ENCODE measurements at regions of chr3 and their contacts with region 1.

Region 1: GRCh38 chr3:194315088-194315964 is 35.8 kb downstream of the CPN2 start:
- DNase-seq: peak; percentile 83 to 92 (median 87)
- ATAC-seq: peak; percentile 61 to 91 (median 90)
- H3K4me3 ChIP-seq: peak overlapping the region; percentile 3 to 63 (median 50)
- H3K27ac ChIP-seq: peak overlapping the region in 6 of 12 donors; percentile 13 to 61 (median 32)
- H3K4me1 ChIP-seq: peaks cover 0 to 39% (median 19%) of the 10 kb centered on the region in 12 donors
- H3K27me3 ChIP-seq: peaks cover 0 to 54% (median 14%) of the 10 kb centered on the region in 9 donors
- CTCF ChIP-seq: peak; percentile 95 to 99 (median 98)
- POLR2A ChIP-seq: no peak

Region 2: DNA sequence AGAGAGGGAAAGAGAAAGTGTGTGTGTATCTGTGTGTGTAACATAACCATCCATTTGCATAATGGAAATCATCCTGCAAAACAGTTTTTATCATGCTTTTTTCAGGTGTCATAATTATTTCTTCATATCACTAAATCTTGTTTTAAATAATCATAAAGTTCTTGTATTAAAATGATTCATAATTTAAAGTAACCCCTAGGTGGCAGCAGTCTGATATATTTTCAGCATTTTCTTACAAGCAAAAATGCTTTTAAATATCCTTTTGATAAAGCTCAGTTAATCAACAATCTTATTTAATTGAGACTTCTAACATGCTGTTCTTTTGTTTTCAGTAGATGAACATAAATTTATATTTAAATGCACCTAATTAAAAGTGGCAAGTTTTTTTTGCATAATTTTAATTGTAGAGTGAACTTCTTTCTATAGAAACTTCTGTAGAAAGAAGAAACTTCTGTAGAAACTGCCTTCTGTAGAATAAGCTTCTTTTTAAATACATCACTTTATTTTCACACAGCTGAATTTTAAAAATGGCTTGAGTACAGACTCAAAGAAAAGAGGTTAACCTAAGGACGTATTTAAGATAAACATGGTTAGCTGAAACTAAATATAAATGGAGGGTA is 649.8 kb before region 1 on chr3:
- intact Hi-C with region 1: loop called in 7 of 10 experiments (anchors 2 to 10 kb)
- DNase-seq: no peak
- ATAC-seq: no peak
- H3K4me3 ChIP-seq: no peak overlapping the region
- H3K27ac ChIP-seq: no peak overlapping the region
- H3K4me1 ChIP-seq: no peaks in the 10 kb centered on the region
- H3K27me3 ChIP-seq: no peaks in the 10 kb centered on the region
- CTCF ChIP-seq: peak; percentile 34 to 64 (median 51)
- POLR2A ChIP-seq: no peak

Region 3: GRCh38 chr3:193788189-193788991 is 526.9 kb before region 1 on chr3:
- intact Hi-C with region 1: loop called in 7 of 10 experiments (anchors 1 to 5 kb)
- DNase-seq: peak; percentile 64 to 75 (median 70)
- ATAC-seq: peak; percentile 75 to 96 (median 94)
- H3K4me3 ChIP-seq: no peak overlapping the region
- H3K27ac ChIP-seq: peak overlapping the region in 3 of 12 donors; percentile 9 to 15 (median 9)
- H3K4me1 ChIP-seq: peaks cover 0 to 18% (median 8%) of the 10 kb centered on the region in 12 donors
- H3K27me3 ChIP-seq: peaks cover 0 to 60% (median 4%) of the 10 kb centered on the region in 9 donors
- CTCF ChIP-seq: peak; percentile 66 to 89 (median 82)
- POLR2A ChIP-seq: no peak

Region 4: DNA sequence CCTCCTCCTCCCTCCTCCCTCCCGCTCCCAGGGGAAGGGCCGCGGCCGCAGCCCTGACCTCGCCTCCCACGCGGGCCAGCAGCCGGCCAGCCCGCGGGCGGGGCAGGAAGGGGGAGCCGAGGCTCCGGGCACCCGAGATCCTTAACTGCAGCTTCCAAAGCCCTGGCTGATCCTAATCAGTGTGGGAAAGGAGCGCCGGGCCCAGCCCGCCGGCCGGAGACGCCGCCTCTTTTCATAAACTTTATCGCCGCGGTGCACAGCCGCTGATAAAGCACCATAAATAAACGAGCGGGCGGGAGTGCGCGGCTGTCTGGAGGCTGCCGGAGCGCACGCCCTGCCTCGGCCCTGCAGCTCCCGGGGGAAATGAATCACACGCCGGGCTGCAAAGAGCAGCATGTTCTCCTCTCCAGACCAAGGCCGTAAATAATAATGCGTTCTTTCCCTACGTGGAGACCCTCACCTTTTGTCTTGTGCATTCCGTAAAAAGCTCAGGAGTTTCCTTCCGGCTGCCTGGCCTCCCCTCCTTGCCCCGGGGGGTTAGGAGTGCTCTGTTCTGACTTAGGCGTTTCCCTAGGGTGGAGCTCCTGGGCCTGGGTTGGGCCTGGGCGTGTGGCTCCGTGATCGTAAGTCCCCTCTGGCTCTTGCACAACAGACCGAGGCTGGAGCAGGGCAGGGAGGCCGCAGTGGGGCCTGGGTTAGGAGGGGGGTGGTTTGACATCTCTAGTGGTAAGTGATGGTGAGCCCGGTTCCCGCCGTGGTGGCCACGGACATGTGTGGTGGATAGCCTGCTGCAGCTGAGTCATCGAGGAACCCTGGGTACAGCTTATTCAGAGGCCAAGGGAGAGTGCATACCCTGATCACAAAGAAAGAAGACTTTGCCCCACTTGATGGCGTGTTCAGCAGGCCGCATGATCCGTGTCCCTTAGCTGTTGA is 311.9 kb before region 1 on chr3:
- intact Hi-C with region 1: loop called in 6 of 10 experiments (anchors 10 kb)
- DNase-seq: peak; percentile 92 to 95 (median 93)
- ATAC-seq: peak; percentile 85 to 95 (median 94)
- H3K4me3 ChIP-seq: peak overlapping the region in 11 of 12 donors; percentile 1 to 54 (median 51)
- H3K27ac ChIP-seq: peak overlapping the region; percentile 40 to 85 (median 74)
- H3K4me1 ChIP-seq: peaks cover 0 to 42% (median 31%) of the 10 kb centered on the region in 12 donors
- H3K27me3 ChIP-seq: peaks cover 0 to 13% (median 0%) of the 10 kb centered on the region in 9 donors
- CTCF ChIP-seq: no peak
- POLR2A ChIP-seq: no peak

Region 5: DNA sequence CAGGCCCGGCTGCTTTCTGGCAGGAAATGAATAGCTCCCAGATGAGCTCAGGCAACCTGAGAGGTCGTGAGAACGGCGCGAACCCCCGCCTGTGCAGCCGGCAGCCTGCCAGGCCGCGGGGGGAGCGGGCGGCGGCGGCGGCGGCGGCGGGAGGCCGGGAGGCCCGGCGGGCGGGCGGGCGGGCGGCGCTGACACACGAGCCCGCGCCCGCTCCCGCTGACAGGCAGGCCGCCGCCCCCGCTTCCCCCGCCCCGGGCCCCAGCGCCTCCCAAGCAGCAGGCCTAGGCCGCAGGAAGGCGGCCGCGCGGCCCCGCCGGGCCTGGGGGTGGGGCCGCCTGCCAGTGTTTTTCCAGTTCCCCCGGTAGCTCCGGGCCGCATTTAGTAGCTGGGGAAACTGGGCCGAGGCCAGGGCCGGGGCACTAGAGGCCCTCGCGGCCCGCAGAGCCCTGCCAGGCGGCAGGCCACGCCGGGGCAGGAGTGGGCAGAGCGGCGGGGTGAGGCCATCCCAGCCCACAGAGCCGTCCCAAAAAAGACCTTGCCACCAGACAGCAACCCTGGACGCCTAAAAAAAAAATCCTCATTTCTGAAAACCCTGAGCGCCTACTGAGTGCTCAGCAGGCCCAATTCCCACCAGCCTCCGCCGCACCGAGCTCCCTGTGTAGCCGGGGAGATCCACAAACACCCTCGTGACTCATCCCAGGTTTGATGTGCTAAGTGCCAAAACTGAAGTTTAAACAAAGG is 173.7 kb before region 1 on chr3:
- intact Hi-C with region 1: loop called in 8 of 10 experiments (anchors 1 to 5 kb)
- DNase-seq: peak; percentile 94 to 96 (median 95)
- ATAC-seq: peak; percentile 74 to 86 (median 80)
- H3K4me3 ChIP-seq: peak overlapping the region in 11 of 12 donors; percentile 2 to 74 (median 49)
- H3K27ac ChIP-seq: peak overlapping the region; percentile 87 to 99 (median 98)
- H3K4me1 ChIP-seq: peaks cover 0 to 63% (median 41%) of the 10 kb centered on the region in 12 donors
- H3K27me3 ChIP-seq: peaks cover 0 to 44% (median 0%) of the 10 kb centered on the region in 9 donors
- CTCF ChIP-seq: peak in 2 of 12 donors; percentile 18 to 31
- POLR2A ChIP-seq: no peak